ENCODE measurements at regions of chr12 and their contacts with region 1.

Region 1: GRCh38 chr12:3973978-3974644 is 100.9 kb upstream of the PARP11 start:
- DNase-seq: peak in 1 of 9 experiments; percentile 49
- ATAC-seq: peak; percentile 22
- H3K4me3 ChIP-seq: peak overlapping the region in 1 of 2 experiments; percentile 4
- H3K4me3 Mint-ChIP-seq: peak overlapping the region; percentile 69
- H3K27ac ChIP-seq: peak overlapping the region in 1 of 2 experiments; percentile 44
- H3K27ac Mint-ChIP-seq: peak overlapping the region; percentile 81
- H3K4me1 ChIP-seq: peaks cover 66% of the 10 kb centered on the region
- H3K4me1 Mint-ChIP-seq: peaks cover 77% of the 10 kb centered on the region
- H3K27me3 ChIP-seq: no peaks in the 10 kb centered on the region
- H3K27me3 Mint-ChIP-seq: no peaks in the 10 kb centered on the region
- CTCF ChIP-seq: no peak

Region 2: DNA sequence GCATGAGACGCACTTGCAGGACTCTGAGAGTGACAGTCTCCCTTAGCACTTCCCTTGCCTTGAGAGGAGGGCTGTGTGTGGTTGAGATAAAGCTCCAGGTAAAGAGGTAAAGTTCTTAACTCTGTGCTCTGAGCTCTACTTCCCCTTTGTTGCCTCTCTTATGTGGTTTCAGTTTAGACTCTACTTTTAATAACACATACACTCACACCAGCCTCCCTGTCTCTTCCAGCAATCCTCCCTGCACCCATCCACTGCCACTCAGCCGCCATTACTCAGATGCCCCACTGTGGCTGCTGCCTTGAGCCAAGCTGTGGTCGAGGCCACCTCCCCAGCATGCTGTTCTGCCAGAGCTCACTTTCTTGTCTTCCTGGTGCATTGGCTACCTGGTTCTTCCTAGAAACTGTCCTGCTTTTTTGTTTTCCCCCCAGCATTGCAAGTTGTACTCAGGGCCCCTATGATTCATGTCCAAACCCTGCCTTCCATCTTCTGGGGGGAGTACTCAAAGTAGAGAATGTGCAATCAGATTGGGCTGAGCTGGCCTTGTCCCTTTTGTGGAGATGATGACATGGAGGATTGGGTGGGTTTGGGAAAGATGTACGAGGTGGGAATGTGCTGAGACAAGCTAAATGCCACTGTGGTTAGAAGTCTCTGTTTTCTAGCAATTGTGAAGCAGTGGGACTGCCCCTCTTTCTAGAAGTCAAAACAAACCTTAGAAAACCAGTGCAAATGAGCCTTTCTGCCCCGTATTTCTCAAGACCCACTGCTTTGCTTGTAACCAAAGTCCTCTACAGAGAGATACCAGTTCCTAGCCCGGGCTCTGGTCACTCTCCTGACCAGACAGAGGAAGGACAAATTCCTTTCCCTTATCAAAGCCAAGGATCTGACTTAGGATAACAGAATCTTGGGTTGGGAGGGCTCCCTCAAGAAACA is 14.7 kb after region 1 on chr12:
- CTCF ChIA-PET with region 1: interaction called, 9 read pairs
- POLR2A ChIA-PET with region 1: interaction called, 19 read pairs
- intact Hi-C with region 1: no loop called
- DNase-seq: peak in 6 of 9 experiments; percentile 26 to 60 (median 30)
- ATAC-seq: peak; percentile 89
- H3K4me3 ChIP-seq: peak overlapping the region in 1 of 2 experiments; percentile 2
- H3K4me3 Mint-ChIP-seq: peak overlapping the region; percentile 60
- H3K27ac ChIP-seq: peak overlapping the region; percentile 5 to 52
- H3K27ac Mint-ChIP-seq: peak overlapping the region; percentile 91
- H3K4me1 ChIP-seq: peaks cover 29% of the 10 kb centered on the region
- H3K4me1 Mint-ChIP-seq: peaks cover 30% of the 10 kb centered on the region
- H3K27me3 ChIP-seq: no peaks in the 10 kb centered on the region
- H3K27me3 Mint-ChIP-seq: no peaks in the 10 kb centered on the region
- CTCF ChIP-seq: no peak

Region 3: DNA sequence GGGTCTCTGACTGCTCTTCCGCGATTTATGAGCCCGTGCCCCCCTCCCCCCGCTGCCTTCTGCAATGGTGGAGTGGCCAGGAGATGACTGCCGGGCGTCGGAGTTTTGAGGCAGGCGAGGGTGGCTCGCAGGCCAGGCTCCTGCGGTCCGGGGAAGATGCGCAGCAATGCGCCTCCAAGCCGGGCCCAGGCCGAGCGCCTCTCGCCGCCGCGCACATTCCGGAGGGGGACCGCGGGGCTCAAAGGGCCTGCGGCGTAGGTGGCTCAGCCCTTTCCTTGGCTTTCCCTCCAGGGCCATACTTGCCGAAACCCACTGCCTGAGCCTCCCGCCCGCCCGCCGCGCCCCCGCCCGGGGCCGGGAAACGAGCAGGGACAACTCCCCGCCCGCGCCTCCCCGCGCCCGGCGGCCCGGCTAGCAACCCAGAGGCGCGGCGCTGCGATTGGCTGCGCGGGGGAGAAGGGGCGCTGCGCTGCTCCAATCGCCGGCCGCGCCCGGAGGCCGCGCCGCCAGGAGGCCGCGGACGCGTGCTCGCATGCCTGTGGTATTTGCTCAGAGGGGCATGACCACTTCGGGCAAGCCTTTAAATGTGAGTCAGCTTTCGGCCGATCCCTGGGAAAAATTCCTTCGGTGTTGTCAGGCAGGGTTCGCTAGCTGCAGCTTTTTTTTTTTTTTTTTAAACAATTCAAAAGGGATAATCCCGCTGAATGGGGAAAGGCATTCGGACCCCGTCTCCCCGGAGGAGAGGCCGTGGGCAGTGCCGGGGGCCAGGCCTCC is 57.0 kb after region 1 on chr12:
- CTCF ChIA-PET with region 1: no interaction called
- POLR2A ChIA-PET with region 1: no interaction called
- intact Hi-C with region 1: loop called in 1 of 2 experiments (anchors 5 kb)
- DNase-seq: peak; percentile 48 to 88 (median 71)
- ATAC-seq: peak; percentile 91
- H3K4me3 ChIP-seq: peak overlapping the region; percentile 40 to 49
- H3K4me3 Mint-ChIP-seq: peak overlapping the region; percentile 78
- H3K27ac ChIP-seq: peak overlapping the region; percentile 37 to 40
- H3K27ac Mint-ChIP-seq: peak overlapping the region; percentile 70
- H3K4me1 ChIP-seq: peaks cover 32% of the 10 kb centered on the region
- H3K4me1 Mint-ChIP-seq: peaks cover 41% of the 10 kb centered on the region
- H3K27me3 ChIP-seq: no peaks in the 10 kb centered on the region
- H3K27me3 Mint-ChIP-seq: no peaks in the 10 kb centered on the region
- CTCF ChIP-seq: no peak

Measured in CD8-positive, alpha-beta T cell (primary cell).